HEK293 (cell line): ENCODE measurements at regions of chr3 and their contacts with region 1.

Region 1: DNA sequence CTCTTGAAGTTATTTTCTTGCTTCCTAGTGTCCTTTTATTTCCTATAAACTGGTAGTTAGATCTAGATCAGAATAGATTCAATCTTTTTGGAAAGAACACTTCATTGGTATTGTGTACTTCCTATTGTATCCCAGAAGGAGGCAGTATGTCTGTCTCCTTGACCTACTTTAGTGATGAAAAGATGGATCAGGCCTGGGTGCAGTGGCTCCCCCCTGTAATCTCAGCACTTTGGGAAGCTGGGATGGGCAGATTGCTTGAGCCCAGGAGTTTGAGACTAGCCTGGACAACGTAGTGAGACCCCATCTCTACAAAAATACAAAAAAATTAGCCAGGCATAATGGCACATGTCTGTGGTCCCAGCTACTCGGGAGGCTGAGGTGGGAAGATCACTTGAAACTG is 12.0 kb downstream of the BSN start:
- H3K4me3 ChIP-seq: no peak overlapping the region
- H3K27ac ChIP-seq: no peak overlapping the region
- H3K4me1 ChIP-seq: no peaks in the 10 kb centered on the region
- CTCF ChIP-seq: no peak

Region 2: GRCh38 chr3:49673715-49674496 is 107.6 kb after region 1 on chr3 and contains the start of gene APEH:
- CTCF ChIA-PET with region 1: interaction called, 21 read pairs
- POLR2A ChIA-PET with region 1: interaction called, 5 read pairs
- H3K4me3 ChIP-seq: peak within 1 kb of the TSS; percentile 89
- H3K27ac ChIP-seq: peak within 1 kb of the TSS; percentile 72
- H3K4me1 ChIP-seq: no peaks in the 10 kb centered on the region
- CTCF ChIP-seq: no peak